ENCODE measurements at regions of chr12 and their contacts with region 1.

Region 1: DNA sequence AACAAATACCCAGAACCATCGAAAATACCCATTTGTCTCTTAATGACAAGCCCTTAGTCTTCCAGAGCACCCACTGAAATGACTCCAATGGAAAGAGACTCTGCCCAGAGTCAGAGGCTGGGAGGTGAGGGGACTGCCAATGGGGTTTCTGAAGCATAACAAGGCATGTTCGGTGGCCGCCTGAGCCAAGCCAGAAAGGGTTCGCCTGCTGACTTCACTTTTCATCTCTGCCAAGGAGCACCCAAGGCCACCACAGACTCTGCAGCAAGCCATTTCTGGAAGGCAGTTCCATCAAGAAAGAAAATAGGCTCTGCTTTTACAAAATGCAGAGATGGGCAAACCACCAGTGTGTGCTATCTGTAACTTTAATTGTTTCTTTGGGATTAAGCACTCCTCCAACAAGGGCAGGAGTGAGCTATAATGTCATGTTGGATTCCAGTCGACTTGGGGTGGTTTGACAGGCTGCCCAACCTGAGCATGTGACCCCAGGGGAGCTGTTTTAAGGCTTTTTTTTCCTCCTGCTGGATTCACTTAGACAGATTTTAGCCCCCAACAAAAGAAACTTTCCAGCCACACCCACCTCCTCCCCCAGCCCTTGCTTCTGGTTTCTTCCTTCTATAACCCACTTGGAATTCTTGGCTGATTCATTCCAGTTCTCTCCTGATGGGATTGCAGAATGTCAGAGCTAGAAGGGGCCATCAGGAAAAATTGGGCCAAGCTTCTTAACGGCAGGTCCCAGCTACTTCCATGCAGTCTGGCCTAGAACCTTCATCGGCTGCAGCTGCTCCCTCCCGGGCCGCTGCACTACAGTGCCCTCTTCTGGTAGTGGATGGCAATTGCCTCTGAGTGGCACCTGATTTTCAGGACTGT is 24.1 kb downstream of the CKAP4 start:
- DNase-seq: peak; percentile 83
- CTCF ChIP-seq: peak; percentile 99

Region 2: DNA sequence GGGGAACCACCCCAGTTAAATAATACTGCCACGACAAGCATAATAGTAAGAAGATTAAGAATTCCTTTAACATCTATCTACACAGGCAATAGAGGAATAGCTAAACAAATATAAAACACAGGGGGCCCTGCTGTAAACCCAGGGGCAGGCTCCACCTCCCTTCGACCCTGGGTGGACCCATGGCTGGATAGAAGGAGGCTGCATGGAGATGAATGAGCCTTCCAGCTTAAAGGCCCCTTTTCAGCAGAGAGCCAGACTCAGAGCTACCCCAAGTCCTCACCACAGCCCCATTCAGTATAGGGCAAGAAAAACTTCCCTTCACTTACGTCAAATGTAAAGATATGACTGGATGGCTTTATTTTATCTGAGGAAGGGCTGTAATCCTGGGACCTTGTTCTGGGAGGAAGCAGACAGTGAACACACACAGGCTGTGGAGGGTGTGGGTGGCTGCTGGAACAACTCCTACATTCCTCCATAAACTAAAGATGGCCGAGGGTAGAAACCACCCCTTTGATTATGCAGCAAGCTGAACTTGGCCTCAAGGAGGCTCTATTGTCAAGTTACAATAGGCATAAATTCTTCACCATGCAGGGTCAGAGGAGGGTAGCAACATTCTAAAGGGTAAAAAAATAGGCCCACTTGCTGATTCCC is 115.4 kb before region 1 on chr12:
- CTCF ChIA-PET with region 1: no interaction called
- POLR2A ChIA-PET with region 1: no interaction called
- DNase-seq: no peak
- CTCF ChIP-seq: no peak

Region 3: DNA sequence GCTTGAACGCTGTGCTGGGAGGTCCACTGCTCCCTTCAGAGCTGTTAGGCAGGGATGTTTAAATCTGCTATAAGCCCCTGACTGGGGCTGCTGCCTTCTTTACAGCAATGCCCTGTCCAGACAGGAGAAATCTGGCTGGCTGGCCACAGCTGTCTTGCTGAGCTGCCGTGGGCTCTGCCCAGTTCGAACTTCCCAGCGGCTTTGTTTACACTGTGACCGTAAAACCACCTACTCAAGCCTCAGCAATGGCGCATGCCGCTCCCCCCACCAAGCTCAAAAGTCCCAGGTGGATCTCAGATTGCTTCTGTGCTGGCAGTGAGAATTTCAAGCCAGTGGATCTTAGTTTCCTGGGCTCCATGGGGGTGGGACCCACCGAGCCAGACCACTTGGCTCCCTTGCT is 11.7 kb before region 1 on chr12:
- CTCF ChIA-PET with region 1: interaction called, 19 read pairs
- POLR2A ChIA-PET with region 1: no interaction called
- DNase-seq: no peak
- CTCF ChIP-seq: no peak

Region 4: DNA sequence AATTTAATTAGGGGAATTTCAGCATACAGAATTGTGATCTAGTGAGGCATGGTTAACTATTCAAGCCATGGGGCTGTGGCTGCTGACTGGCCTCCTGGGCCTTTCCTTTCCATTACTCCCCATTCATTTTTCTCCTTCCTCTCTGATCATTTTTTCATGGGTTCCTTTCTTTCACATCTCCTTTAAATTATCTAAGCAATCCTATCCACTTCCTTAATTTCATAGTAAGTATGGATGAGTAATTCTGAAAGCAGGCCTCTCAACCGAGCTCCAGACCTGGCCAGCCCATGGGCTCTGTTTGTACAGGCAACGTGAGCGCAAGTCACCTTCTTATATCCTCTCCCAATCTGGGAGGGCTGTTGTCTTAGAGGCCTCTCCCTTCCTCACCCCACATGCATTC is 10.7 kb after region 1 on chr12:
- CTCF ChIA-PET with region 1: interaction called, 16 read pairs
- POLR2A ChIA-PET with region 1: no interaction called
- DNase-seq: no peak
- CTCF ChIP-seq: no peak

Region 5: GRCh38 chr12:106302401-106303201 is 78.9 kb after region 1 on chr12 and contains the start of gene TCP11L2:
- CTCF ChIA-PET with region 1: no interaction called
- POLR2A ChIA-PET with region 1: no interaction called
- DNase-seq: peak; percentile 95
- CTCF ChIP-seq: no peak